CD4-positive, alpha-beta memory T cell (primary cell): ENCODE measurements at regions of chr4 and their contacts with region 1.

Region 1: DNA sequence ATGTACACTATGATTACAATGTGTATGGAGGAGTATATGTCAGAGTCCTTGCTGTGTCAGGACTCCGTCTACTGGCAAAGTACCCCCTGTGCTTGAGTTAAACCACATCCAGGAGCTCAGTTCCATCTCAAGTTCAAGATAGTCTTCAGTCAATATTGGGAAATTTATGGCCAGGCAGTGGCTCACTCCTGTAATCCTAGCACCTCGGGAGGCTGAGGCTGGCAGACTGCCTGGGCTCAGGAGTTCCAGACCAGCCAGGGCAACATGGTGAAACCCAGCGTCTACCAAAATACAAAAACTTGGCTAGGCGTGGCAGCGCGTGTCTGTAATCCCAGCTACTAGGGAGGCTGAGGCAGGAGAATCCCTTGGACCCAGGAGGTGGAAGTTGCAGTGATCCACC is 5.8 kb downstream of the SLBP start:
- DNase-seq: no peak
- H3K4me3 ChIP-seq: no peak overlapping the region
- H3K4me3 Mint-ChIP-seq: peak overlapping the region in 1 of 8 donors; percentile 55
- H3K27ac ChIP-seq: no peak overlapping the region
- H3K27ac Mint-ChIP-seq: peak overlapping the region in 1 of 7 donors; percentile 61
- H3K4me1 ChIP-seq: peaks cover 30% of the 10 kb centered on the region
- H3K4me1 Mint-ChIP-seq: peaks cover 28 to 80% (median 50%) of the 10 kb centered on the region in 4 donors
- H3K27me3 ChIP-seq: no peaks in the 10 kb centered on the region
- H3K27me3 Mint-ChIP-seq: no peaks in the 10 kb centered on the region

Region 2: DNA sequence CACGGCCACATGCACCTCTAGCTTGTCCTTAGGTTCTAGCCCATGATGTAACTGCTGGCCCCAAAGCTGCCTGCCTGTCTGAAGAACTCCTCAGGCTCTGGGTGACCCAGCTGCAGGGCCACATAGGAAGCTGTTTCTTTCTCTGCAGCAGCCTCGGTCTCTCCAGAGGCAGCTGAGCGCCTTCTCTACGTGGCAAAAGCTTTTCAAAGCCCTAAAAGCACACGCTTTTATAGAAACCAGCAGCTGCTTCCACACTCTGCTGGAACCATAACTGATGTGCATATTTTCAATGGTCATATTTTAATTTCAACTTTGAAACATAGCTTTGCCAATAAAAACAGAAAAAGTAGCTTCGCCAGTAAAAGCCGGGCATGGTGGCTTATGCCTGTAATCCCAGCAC is 59.7 kb before region 1 on chr4:
- CTCF ChIA-PET with region 1: no interaction called
- POLR2A ChIA-PET with region 1: no interaction called
- intact Hi-C with region 1: no loop called
- DNase-seq: no peak
- H3K4me3 ChIP-seq: no peak overlapping the region
- H3K4me3 Mint-ChIP-seq: no peak overlapping the region
- H3K27ac ChIP-seq: no peak overlapping the region
- H3K27ac Mint-ChIP-seq: no peak overlapping the region
- H3K4me1 ChIP-seq: no peaks in the 10 kb centered on the region
- H3K4me1 Mint-ChIP-seq: peaks cover 0 to 6% (median 3%) of the 10 kb centered on the region in 4 donors
- H3K27me3 ChIP-seq: no peaks in the 10 kb centered on the region
- H3K27me3 Mint-ChIP-seq: no peaks in the 10 kb centered on the region

Region 3: GRCh38 chr4:1666391-1666790 is 40.0 kb before region 1 on chr4:
- CTCF ChIA-PET with region 1: no interaction called
- POLR2A ChIA-PET with region 1: no interaction called
- intact Hi-C with region 1: no loop called
- DNase-seq: no peak
- H3K4me3 ChIP-seq: no peak overlapping the region
- H3K4me3 Mint-ChIP-seq: no peak overlapping the region
- H3K27ac ChIP-seq: no peak overlapping the region
- H3K27ac Mint-ChIP-seq: no peak overlapping the region
- H3K4me1 ChIP-seq: no peaks in the 10 kb centered on the region
- H3K4me1 Mint-ChIP-seq: peaks cover 0 to 2% (median 0%) of the 10 kb centered on the region in 4 donors
- H3K27me3 ChIP-seq: no peaks in the 10 kb centered on the region
- H3K27me3 Mint-ChIP-seq: no peaks in the 10 kb centered on the region

Region 4: GRCh38 chr4:1726146-1726934 is 20.0 kb after region 1 on chr4:
- CTCF ChIA-PET with region 1: interaction called, 13 read pairs
- POLR2A ChIA-PET with region 1: interaction called, 196 read pairs
- intact Hi-C with region 1: no loop called
- DNase-seq: peak; percentile 81 to 88 (median 85)
- H3K4me3 ChIP-seq: no peak overlapping the region
- H3K4me3 Mint-ChIP-seq: peak overlapping the region in 7 of 8 donors; percentile 36 to 76 (median 59)
- H3K27ac ChIP-seq: no peak overlapping the region
- H3K27ac Mint-ChIP-seq: peak overlapping the region; percentile 54 to 89 (median 82)
- H3K4me1 ChIP-seq: peaks cover 79% of the 10 kb centered on the region
- H3K4me1 Mint-ChIP-seq: peaks cover 38 to 87% (median 56%) of the 10 kb centered on the region in 4 donors
- H3K27me3 ChIP-seq: no peaks in the 10 kb centered on the region
- H3K27me3 Mint-ChIP-seq: no peaks in the 10 kb centered on the region

Region 5: GRCh38 chr4:3318561-3319021 is 1612.2 kb after region 1 on chr4:
- CTCF ChIA-PET with region 1: no interaction called
- POLR2A ChIA-PET with region 1: no interaction called
- intact Hi-C with region 1: no loop called
- DNase-seq: no peak
- H3K4me3 ChIP-seq: no peak overlapping the region
- H3K4me3 Mint-ChIP-seq: no peak overlapping the region
- H3K27ac ChIP-seq: no peak overlapping the region
- H3K27ac Mint-ChIP-seq: peak overlapping the region in 1 of 7 donors; percentile 19
- H3K4me1 ChIP-seq: no peaks in the 10 kb centered on the region
- H3K4me1 Mint-ChIP-seq: no peaks in the 10 kb centered on the region
- H3K27me3 ChIP-seq: no peaks in the 10 kb centered on the region
- H3K27me3 Mint-ChIP-seq: no peaks in the 10 kb centered on the region